ENCODE measurements at regions of chr4 and their contacts with region 1.

Region 1: DNA sequence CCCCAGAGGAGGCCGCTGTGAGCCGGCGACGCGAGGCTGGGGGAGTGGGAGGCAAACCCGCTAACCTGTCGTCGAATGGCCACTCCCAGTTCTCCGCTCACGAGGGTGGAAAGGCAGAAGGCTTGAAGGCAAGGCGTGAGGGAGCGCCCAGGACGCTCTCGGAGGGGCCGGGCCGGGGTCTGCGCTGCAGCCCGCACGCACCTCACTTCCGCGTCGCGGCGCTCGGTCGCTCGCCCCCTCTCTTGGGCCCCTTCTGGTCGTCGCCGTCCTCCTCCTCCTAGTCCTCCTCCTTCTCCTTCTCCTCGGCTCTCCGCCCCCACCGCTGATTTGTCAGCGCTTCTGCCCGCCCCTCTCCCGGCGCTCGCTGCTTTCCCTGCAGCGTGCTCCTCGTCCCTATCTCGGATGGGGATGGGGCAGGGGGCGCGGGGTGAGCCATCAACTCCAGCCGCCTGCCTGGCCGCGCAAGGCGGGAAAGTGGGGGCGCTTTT is at the start of gene SNCA:
- DNase-seq: peak; percentile 73 to 97 (median 84)

Region 2: GRCh38 chr4:89681215-89681614 is 155.7 kb before region 1 on chr4:
- intact Hi-C with region 1: no loop called
- DNase-seq: peak in 1 of 10 donors; percentile 57

Region 3: GRCh38 chr4:89708903-89709421 is 128.0 kb before region 1 on chr4:
- intact Hi-C with region 1: loop called (anchors 10 kb)
- DNase-seq: peak in 6 of 10 donors; percentile 13 to 72 (median 24)

Region 4: DNA sequence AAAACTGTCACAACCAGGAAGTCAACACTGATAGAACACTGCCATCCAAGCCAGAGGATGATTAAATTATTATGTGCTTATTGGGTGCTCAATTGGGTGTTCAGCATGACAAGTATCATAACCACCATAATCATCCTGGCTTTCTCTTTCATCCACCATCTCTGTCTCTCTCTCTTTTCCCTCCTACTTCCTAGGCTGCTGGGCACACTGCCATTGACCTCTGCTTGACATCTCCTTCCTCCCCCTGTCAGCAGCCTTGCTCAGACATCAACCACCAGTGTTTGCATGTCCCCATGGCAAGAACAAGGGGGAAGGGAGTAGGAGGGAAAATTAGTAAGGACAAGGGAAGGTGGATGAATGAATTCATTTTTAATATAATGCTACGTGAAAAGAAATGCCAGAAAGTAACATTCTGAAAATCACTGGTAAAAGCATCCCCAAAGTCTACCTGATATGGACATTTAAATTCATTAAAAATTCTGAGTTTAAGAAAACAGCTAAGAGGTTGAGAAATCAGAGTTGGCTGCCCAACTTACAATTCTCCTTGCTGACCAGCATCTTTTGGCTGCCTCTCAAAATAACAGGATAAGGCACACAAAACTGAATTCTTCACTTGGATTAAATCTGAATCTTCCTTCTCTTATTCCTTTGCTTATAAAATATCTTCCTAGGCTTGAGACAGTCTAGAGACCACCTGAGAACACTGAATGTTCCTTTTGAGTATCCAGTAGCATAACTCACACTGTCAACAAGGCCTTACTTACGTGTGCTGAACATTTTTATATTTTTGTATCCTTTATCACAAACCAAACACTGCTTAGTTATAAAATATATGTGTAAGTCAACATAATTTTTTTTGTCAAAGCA is 48.5 kb before region 1 on chr4:
- intact Hi-C with region 1: no loop called
- DNase-seq: peak in 1 of 10 donors; percentile 16

Region 5: GRCh38 chr4:89894649-89895550 is 58.0 kb after region 1 on chr4 and contains the start of gene MMRN1:
- intact Hi-C with region 1: loop called (anchors 5 kb)
- DNase-seq: no peak

Measured in posterior cingulate gyrus (tissue), 11 donors.